GM12878 (cell line): ENCODE measurements at regions of chr10 and their contacts with region 1.

Region 1: GRCh38 chr10:59060852-59061251 is 115.6 kb upstream of the PHYHIPL start:
- DNase-seq: peak; percentile 53
- ATAC-seq: peak; percentile 87
- H3K4me3 ChIP-seq: no peak overlapping the region
- H3K27ac ChIP-seq: no peak overlapping the region
- H3K4me1 ChIP-seq: peaks cover 7% of the 10 kb centered on the region
- H3K27me3 ChIP-seq: no peaks in the 10 kb centered on the region
- CTCF ChIP-seq: no peak
- EP300 ChIP-seq: peak; percentile 27 to 67; a peak in 3 of 4 replicates
- POLR2A ChIP-seq: no peak
- RAD21 ChIP-seq: no peak; the same call in 1 of the 2 replicates

Region 2: DNA sequence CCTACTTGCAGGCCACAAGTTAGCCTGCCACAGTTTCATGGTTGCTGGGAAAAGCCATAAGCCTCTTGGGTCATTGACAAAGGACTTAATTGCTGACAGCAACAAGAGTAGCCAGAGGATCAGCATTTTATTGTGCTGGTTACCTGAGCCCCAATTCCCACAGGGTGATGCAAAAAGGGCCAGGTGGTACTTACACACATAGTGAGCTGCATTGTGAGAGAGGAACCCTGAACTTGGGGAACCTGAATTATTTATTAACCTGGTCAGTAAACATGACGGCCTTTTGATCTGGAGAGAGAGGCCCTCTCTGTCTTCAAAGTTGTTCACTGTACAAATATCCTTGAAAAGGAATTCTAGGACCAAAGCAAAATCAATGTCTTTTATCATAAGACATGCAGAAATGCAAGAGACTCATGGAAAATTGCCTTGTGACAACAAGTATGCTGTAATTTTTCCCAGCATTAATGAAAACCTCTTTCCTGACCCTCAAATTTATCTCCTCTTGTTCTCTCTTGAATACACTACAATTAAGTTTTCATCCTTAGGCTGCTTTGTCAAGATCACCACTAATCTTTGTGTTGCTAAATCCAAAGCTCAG is 12.7 kb after region 1 on chr10:
- CTCF ChIA-PET with region 1: interaction called, 3 read pairs
- POLR2A ChIA-PET with region 1: interaction called, 3 read pairs
- RAD21 ChIA-PET with region 1: interaction called, 9 read pairs
- SMC1A ChIA-PET with region 1: interaction called, 94 read pairs
- in situ Hi-C with region 1: no loop called
- intact Hi-C with region 1: no loop called
- DNase-seq: no peak
- ATAC-seq: peak; percentile 14; the same call in 1 of the 3 replicates
- H3K4me3 ChIP-seq: no peak overlapping the region
- H3K27ac ChIP-seq: no peak overlapping the region
- H3K4me1 ChIP-seq: no peaks in the 10 kb centered on the region
- H3K27me3 ChIP-seq: no peaks in the 10 kb centered on the region
- CTCF ChIP-seq: no peak
- EP300 ChIP-seq: no peak
- POLR2A ChIP-seq: no peak
- RAD21 ChIP-seq: no peak

Region 3: DNA sequence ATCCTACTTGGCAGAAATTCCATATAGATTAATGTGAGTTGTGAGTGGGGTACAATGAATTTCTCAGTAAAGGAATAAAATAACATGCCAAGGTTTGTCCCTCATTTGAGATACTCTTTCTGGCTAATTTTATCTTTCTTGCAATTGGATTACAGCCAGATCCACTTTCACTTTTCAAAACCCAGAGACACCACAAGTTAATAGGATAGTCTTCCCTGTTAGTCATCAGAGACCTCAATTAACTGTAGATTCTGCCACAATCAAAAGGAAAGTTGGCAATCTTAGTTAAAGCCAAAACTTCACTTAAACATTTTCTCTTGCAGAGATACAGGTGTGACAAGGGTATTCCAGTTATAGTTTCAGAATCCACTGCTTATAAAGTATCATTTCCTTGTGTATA is 24.2 kb after region 1 on chr10:
- CTCF ChIA-PET with region 1: interaction called, 4 read pairs
- POLR2A ChIA-PET with region 1: interaction called, 4 read pairs
- RAD21 ChIA-PET with region 1: interaction called, 6 read pairs
- SMC1A ChIA-PET with region 1: interaction called, 94 read pairs
- in situ Hi-C with region 1: no loop called
- intact Hi-C with region 1: no loop called
- DNase-seq: no peak
- ATAC-seq: no peak
- H3K4me3 ChIP-seq: no peak overlapping the region
- H3K27ac ChIP-seq: no peak overlapping the region
- H3K4me1 ChIP-seq: 0 out of 2 replicates have a peak, but pooled peaks cover 3% of the 10 kb centered on the region
- H3K27me3 ChIP-seq: no peaks in the 10 kb centered on the region
- CTCF ChIP-seq: no peak
- EP300 ChIP-seq: no peak
- POLR2A ChIP-seq: no peak
- RAD21 ChIP-seq: no peak

Region 4: DNA sequence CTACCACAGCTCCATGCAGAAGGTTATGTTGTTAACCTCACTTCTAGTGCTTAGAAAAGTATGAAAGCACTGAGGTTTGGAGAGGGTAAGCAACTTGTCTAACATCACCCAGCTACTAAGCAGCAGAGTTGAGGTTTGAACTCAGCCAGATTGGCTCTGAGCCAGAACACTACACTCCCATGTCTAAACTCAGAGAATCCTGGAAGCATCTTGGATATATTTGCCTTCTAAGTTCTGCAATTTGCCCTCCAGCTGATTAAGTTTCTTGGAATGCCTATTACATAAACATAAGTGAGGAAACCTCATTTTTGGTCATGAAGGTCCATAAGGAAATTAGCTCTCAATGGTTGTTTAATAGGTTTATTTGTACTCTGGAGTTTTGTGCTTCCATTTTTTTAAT is 37.5 kb after region 1 on chr10:
- CTCF ChIA-PET with region 1: no interaction called
- POLR2A ChIA-PET with region 1: interaction called, 3 read pairs
- RAD21 ChIA-PET with region 1: interaction called, 7 read pairs
- SMC1A ChIA-PET with region 1: interaction called, 106 read pairs
- in situ Hi-C with region 1: no loop called
- intact Hi-C with region 1: no loop called
- DNase-seq: no peak
- ATAC-seq: no peak
- H3K4me3 ChIP-seq: no peak overlapping the region
- H3K27ac ChIP-seq: no peak overlapping the region
- H3K4me1 ChIP-seq: no peaks in the 10 kb centered on the region
- H3K27me3 ChIP-seq: no peaks in the 10 kb centered on the region
- CTCF ChIP-seq: no peak
- EP300 ChIP-seq: no peak
- POLR2A ChIP-seq: no peak
- RAD21 ChIP-seq: no peak

Region 5: DNA sequence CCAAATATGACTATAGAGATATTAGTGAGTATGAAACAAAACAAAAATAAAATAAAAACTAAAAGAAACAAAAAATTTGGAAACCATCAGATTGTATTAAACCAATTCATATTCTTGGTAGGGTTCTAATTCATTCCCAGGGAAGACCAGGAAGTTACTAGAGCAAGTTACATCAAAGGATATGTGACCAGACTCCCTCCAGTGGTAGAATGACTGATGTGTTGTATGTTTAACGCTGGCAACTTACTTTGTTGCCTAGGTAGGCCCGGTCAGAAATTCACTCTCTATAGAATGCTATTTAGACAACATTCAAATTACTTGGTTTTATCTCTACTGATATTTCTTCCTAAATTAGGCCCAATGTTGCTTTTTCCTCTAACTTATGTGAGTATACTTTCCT is 120.8 kb after region 1 on chr10:
- CTCF ChIA-PET with region 1: no interaction called
- POLR2A ChIA-PET with region 1: no interaction called
- RAD21 ChIA-PET with region 1: interaction called, 15 read pairs
- SMC1A ChIA-PET with region 1: interaction called, 4 read pairs
- in situ Hi-C with region 1: no loop called
- intact Hi-C with region 1: loop called (anchors 5 kb)
- DNase-seq: peak; percentile 17
- ATAC-seq: peak; percentile 90
- H3K4me3 ChIP-seq: no peak overlapping the region
- H3K27ac ChIP-seq: no peak overlapping the region
- H3K4me1 ChIP-seq: no peaks in the 10 kb centered on the region
- H3K27me3 ChIP-seq: peaks cover 0 to 4% of the 10 kb centered on the region in 2 experiments; a peak in 1 of 4 replicates
- CTCF ChIP-seq: peak; percentile 37 to 67 (median 55); a peak in 5 of 6 replicates
- EP300 ChIP-seq: no peak
- POLR2A ChIP-seq: no peak
- RAD21 ChIP-seq: peak; percentile 80